PC-9 (cell line): ENCODE measurements at regions of chr10 and their contacts with region 1.

Region 1: DNA sequence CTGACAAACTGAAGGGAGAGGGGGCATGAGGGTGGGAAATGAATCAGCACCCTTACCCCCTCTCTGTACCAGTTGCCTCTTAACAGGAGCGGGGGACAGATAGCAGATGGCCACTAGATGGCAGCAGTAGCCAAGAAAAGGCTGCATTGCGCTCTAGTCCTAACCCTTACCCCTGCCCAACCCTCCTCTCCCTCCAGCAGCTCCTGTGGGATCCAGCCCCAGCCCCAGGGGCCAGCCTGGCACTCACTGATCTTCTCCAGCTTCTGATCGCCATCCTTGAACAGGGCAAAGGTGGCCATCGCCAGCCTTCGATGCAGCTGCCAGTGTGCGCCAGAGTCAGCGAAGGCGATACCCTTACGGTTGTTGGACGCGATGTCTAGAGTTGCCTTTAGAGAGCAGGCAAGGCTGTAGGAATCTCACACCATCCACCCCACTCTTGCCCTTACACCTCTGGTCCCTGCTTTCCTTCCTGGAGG is 2.2 kb downstream of the CYP17A1 start:
- DNase-seq: peak; percentile 38 to 58
- H3K4me3 ChIP-seq: no peak overlapping the region
- H3K27ac ChIP-seq: no peak overlapping the region
- H3K4me1 ChIP-seq: no peaks in the 10 kb centered on the region
- H3K27me3 ChIP-seq: no peaks in the 10 kb centered on the region
- CTCF ChIP-seq: peak; percentile 80

Region 2: GRCh38 chr10:102904346-102904745 is 69.3 kb after region 1 on chr10:
- CTCF ChIA-PET with region 1: no interaction called
- POLR2A ChIA-PET with region 1: no interaction called
- intact Hi-C with region 1: loop called (anchors 2 kb)
- DNase-seq: no peak
- H3K4me3 ChIP-seq: no peak overlapping the region
- H3K27ac ChIP-seq: no peak overlapping the region
- H3K4me1 ChIP-seq: no peaks in the 10 kb centered on the region
- H3K27me3 ChIP-seq: no peaks in the 10 kb centered on the region
- CTCF ChIP-seq: no peak

Region 3: GRCh38 chr10:103069453-103070331 is 234.6 kb after region 1 on chr10:
- CTCF ChIA-PET with region 1: no interaction called
- POLR2A ChIA-PET with region 1: no interaction called
- intact Hi-C with region 1: loop called (anchors 2 kb)
- DNase-seq: peak; percentile 40 to 45
- H3K4me3 ChIP-seq: no peak overlapping the region
- H3K27ac ChIP-seq: no peak overlapping the region
- H3K4me1 ChIP-seq: no peaks in the 10 kb centered on the region; the same call in 1 of the 2 replicates
- H3K27me3 ChIP-seq: no peaks in the 10 kb centered on the region
- CTCF ChIP-seq: peak; percentile 71

Region 4: GRCh38 chr10:103333925-103334520 is 499.0 kb after region 1 on chr10:
- CTCF ChIA-PET with region 1: no interaction called
- POLR2A ChIA-PET with region 1: no interaction called
- intact Hi-C with region 1: loop called (anchors 5 kb)
- DNase-seq: no peak
- H3K4me3 ChIP-seq: no peak overlapping the region
- H3K27ac ChIP-seq: no peak overlapping the region
- H3K4me1 ChIP-seq: no peaks in the 10 kb centered on the region
- H3K27me3 ChIP-seq: no peaks in the 10 kb centered on the region
- CTCF ChIP-seq: peak; percentile 71